Heart right ventricle (tissue), 16 donors: ENCODE measurements at regions of chr3 and their contacts with region 1.

Region 1: DNA sequence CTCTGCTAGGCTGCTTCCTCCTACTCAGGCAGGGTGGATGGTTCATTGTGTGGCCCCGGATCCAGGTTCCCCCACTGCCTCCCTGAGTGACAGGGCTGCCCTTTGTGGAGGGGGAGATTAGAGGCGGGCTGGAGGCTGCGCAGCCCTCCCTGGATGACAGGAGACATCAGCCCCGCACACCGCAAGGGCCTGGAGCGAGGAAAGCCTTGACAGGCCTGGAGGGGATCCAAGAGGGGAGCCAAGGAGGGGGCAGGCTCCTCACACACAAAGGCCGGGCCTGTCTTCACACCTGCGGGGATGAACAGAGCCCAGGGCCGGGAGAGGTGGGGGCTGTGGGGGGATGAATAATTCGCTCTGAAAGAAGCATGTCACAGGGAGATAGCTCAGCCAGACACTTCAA is 72.9 kb downstream of the RPN1 start:
- DNase-seq: no peak
- ATAC-seq: no peak
- H3K4me3 ChIP-seq: no peak overlapping the region
- H3K27ac ChIP-seq: no peak overlapping the region
- H3K4me1 ChIP-seq: peaks cover 3 to 40% (median 22%) of the 10 kb centered on the region in 9 donors
- H3K27me3 ChIP-seq: peaks cover 0 to 16% (median under 1%) of the 10 kb centered on the region in 7 donors
- CTCF ChIP-seq: no peak

Region 2: GRCh38 chr3:128482666-128483656 is 94.8 kb before region 1 on chr3:
- intact Hi-C with region 1: loop called in 4 of 10 experiments (anchors 2 to 5 kb)
- DNase-seq: peak in 1 of 2 donors; percentile 73
- ATAC-seq: peak; percentile 11 to 56 (median 45)
- H3K4me3 ChIP-seq: peak overlapping the region; percentile 23 to 85 (median 67)
- H3K27ac ChIP-seq: peak overlapping the region; percentile 38 to 98 (median 93)
- H3K4me1 ChIP-seq: peaks cover 6 to 91% (median 61%) of the 10 kb centered on the region in 9 donors
- H3K27me3 ChIP-seq: peaks cover 0 to 90% (median 67%) of the 10 kb centered on the region in 7 donors
- CTCF ChIP-seq: peak in 5 of 9 donors; percentile 6 to 52 (median 26)